CD8-positive, alpha-beta memory T cell (primary cell): ENCODE measurements at regions of chr6 and their contacts with region 1.

Region 1: DNA sequence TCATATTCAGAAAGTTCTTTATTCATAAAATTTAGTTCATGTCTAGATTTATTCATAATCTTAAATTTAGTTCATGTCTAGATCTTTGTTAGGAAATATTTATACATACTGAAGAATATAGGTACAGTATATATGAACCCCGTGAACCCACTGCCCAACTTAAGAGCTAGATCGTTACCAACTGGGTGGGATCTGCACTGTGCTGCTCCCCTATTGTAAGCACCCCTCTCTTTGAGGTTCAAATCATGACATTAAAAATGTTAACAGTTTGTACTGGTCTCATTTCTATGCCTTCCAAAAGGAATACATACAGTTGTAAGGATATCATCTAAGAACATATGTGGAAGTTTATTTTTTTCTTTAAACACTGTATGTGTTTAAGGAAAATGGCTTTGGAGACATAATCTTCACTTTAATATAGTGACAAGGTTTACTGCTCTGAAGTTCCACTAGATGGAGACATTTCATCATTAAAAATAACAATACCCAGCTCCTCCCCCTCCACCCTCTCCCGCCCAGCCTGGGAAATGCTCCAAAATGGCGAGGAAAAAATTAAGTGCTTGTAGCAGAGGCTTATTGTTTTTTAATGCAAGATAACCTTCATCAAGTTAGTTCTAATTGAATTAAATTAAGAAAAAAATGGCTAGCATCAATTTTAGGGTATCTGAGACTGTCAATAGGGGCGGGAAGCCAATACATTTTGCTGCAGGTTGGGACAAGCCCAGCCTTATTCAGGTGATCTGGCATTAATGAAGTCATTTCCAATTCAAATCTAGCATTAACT is 104.1 kb upstream of the TRAF3IP2 start:
- DNase-seq: peak; percentile 27 to 76 (median 71)
- H3K4me3 ChIP-seq: no peak overlapping the region
- H3K4me3 Mint-ChIP-seq: peak overlapping the region in 6 of 7 donors; percentile 10 to 79 (median 55)
- H3K27ac ChIP-seq: no peak overlapping the region
- H3K27ac Mint-ChIP-seq: peak overlapping the region; percentile 64 to 99 (median 92)
- H3K4me1 ChIP-seq: peaks cover 55% of the 10 kb centered on the region
- H3K4me1 Mint-ChIP-seq: peaks cover 53 to 78% (median 55%) of the 10 kb centered on the region in 3 donors
- H3K27me3 ChIP-seq: no peaks in the 10 kb centered on the region
- H3K27me3 Mint-ChIP-seq: peaks cover 0 to 3% of the 10 kb centered on the region in 2 donors

Region 2: DNA sequence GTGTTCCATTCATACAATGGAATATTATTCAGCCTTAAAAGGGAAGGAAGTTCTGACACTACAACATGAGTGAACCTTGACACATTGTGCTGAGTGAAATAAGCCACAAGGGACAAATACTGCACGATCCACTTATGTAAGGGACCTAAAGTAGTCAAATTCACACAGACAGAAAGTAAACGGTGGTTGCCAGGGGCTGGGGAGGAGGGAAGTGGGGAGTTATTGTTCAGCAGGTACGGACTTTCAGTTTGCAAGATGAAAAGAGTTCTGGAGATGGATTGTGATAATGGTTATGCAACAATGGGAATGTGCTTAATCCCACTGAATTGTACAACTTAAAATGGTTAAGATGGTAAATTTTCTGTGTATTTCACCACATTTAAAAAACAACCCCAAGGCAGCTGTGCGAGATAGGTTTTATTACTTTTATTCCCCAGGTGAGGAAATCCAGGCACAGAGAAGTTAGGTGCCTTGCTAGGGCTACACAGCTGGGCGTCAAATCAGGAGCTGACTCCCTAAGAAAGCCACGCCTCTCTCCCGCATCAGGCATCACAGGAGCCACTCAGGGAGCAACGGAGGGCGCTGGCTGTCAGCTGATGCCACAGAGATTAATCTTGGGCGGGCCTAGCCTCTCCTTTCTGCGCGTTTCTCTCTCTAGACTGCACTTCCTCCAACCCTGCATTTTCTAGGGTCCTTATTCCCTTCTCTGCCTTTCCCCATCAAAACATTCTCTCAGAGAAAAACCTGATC is 94.8 kb before region 1 on chr6:
- CTCF ChIA-PET with region 1: no interaction called
- POLR2A ChIA-PET with region 1: no interaction called
- DNase-seq: no peak
- H3K4me3 ChIP-seq: no peak overlapping the region
- H3K4me3 Mint-ChIP-seq: no peak overlapping the region
- H3K27ac ChIP-seq: no peak overlapping the region
- H3K27ac Mint-ChIP-seq: no peak overlapping the region
- H3K4me1 ChIP-seq: no peaks in the 10 kb centered on the region
- H3K4me1 Mint-ChIP-seq: no peaks in the 10 kb centered on the region
- H3K27me3 ChIP-seq: no peaks in the 10 kb centered on the region
- H3K27me3 Mint-ChIP-seq: peaks cover 3 to 15% of the 10 kb centered on the region in 2 donors

Region 3: DNA sequence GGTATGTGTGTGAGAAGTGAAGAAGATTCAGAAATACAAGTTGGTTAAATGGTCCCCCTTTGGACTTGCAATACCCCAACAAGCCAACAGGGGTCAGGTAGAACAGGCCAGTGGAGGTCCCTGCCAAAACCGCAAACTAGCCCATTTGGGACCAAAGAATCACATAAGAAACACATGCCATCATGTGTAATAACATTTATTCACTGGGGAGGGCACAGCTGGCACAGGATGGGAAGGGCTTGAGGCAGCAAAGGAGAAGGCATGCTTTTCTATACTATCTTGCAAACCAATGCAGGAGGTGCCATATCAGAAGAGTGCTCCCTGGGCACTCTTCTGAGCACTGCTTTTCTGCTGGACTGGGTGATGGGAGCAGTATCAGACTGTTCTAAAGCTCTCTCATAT is 11.9 kb after region 1 on chr6:
- CTCF ChIA-PET with region 1: interaction called, 10 read pairs
- POLR2A ChIA-PET with region 1: interaction called, 4 read pairs
- DNase-seq: peak in 3 of 5 donors; percentile 35 to 47 (median 45)
- H3K4me3 ChIP-seq: no peak overlapping the region
- H3K4me3 Mint-ChIP-seq: peak overlapping the region in 6 of 7 donors; percentile 29 to 67 (median 50)
- H3K27ac ChIP-seq: no peak overlapping the region
- H3K27ac Mint-ChIP-seq: peak overlapping the region; percentile 87 to 98 (median 92)
- H3K4me1 ChIP-seq: peaks cover 72% of the 10 kb centered on the region
- H3K4me1 Mint-ChIP-seq: peaks cover 84 to 97% (median 84%) of the 10 kb centered on the region in 3 donors
- H3K27me3 ChIP-seq: no peaks in the 10 kb centered on the region
- H3K27me3 Mint-ChIP-seq: no peaks in the 10 kb centered on the region

Region 4: GRCh38 chr6:111997078-111997852 is 287.5 kb after region 1 on chr6:
- CTCF ChIA-PET with region 1: interaction called, 37 read pairs
- POLR2A ChIA-PET with region 1: interaction called, 13 read pairs
- DNase-seq: peak; percentile 72 to 85 (median 76)
- H3K4me3 ChIP-seq: peak overlapping the region; percentile 3
- H3K4me3 Mint-ChIP-seq: peak overlapping the region in 6 of 7 donors; percentile 62 to 80 (median 74)
- H3K27ac ChIP-seq: no peak overlapping the region
- H3K27ac Mint-ChIP-seq: peak overlapping the region in 7 of 8 donors; percentile 43 to 81 (median 67)
- H3K4me1 ChIP-seq: peaks cover 40% of the 10 kb centered on the region
- H3K4me1 Mint-ChIP-seq: peaks cover 36 to 43% (median 39%) of the 10 kb centered on the region in 3 donors
- H3K27me3 ChIP-seq: no peaks in the 10 kb centered on the region
- H3K27me3 Mint-ChIP-seq: peaks cover 0 to 2% of the 10 kb centered on the region in 2 donors

Region 5: GRCh38 chr6:112010328-112010727 is 300.5 kb after region 1 on chr6:
- CTCF ChIA-PET with region 1: interaction called, 13 read pairs
- POLR2A ChIA-PET with region 1: no interaction called
- DNase-seq: peak in 2 of 5 donors; percentile 33 to 51
- H3K4me3 ChIP-seq: no peak overlapping the region
- H3K4me3 Mint-ChIP-seq: no peak overlapping the region
- H3K27ac ChIP-seq: no peak overlapping the region
- H3K27ac Mint-ChIP-seq: peak overlapping the region in 2 of 8 donors; percentile 2 to 44
- H3K4me1 ChIP-seq: peaks cover 5% of the 10 kb centered on the region
- H3K4me1 Mint-ChIP-seq: peaks cover 0 to 4% (median 0%) of the 10 kb centered on the region in 3 donors
- H3K27me3 ChIP-seq: no peaks in the 10 kb centered on the region
- H3K27me3 Mint-ChIP-seq: peaks cover 0 to 4% of the 10 kb centered on the region in 2 donors

Region 6: GRCh38 chr6:112029045-112029822 is 319.4 kb after region 1 on chr6:
- CTCF ChIA-PET with region 1: interaction called, 12 read pairs
- POLR2A ChIA-PET with region 1: no interaction called
- DNase-seq: peak; percentile 32 to 68 (median 46)
- H3K4me3 ChIP-seq: peak overlapping the region; percentile 16
- H3K4me3 Mint-ChIP-seq: peak overlapping the region in 6 of 7 donors; percentile 17 to 73 (median 66)
- H3K27ac ChIP-seq: no peak overlapping the region
- H3K27ac Mint-ChIP-seq: peak overlapping the region; percentile 79 to 96 (median 93)
- H3K4me1 ChIP-seq: peaks cover 69% of the 10 kb centered on the region
- H3K4me1 Mint-ChIP-seq: peaks cover 47 to 72% (median 65%) of the 10 kb centered on the region in 3 donors
- H3K27me3 ChIP-seq: no peaks in the 10 kb centered on the region
- H3K27me3 Mint-ChIP-seq: peaks cover 0 to 2% of the 10 kb centered on the region in 2 donors